Activated CD4-positive, alpha-beta memory T cell treated with anti-CD3 and anti-CD28 coated beads, Interleukin-2, amount 10 ng/mL, durations not matched to agents 7 days and 5 days (primary cell): ENCODE measurements at regions of chr1 and their contacts with region 1.

Region 1: GRCh38 chr1:167263819-167264464 is 43.3 kb downstream of the POU2F1 start:
- DNase-seq: no peak
- H3K4me3 Mint-ChIP-seq: no peak overlapping the region
- H3K27ac Mint-ChIP-seq: no peak overlapping the region
- H3K4me1 Mint-ChIP-seq: peaks cover 20% of the 10 kb centered on the region
- H3K27me3 Mint-ChIP-seq: no peaks in the 10 kb centered on the region

Region 2: DNA sequence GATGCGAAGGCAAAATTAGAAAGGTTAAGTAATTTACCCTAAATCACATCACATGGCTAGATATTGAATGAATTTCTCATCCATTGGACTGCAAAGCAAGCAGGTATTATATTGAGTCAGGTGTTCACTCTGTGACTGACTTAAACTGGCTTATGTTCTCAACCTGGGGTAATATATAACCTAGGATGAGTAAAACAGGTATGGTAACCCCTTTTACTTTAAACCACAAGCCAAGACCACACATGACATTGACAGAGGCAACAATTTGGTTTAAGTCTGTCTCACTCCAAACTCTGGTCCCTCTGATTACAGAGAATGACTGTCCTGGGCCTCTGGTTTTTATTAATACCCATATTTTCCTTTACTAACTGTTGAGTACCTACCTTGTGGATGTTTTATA is 241.6 kb before region 1 on chr1:
- CTCF ChIA-PET with region 1: no interaction called
- POLR2A ChIA-PET with region 1: no interaction called
- DNase-seq: no peak
- H3K4me3 Mint-ChIP-seq: no peak overlapping the region
- H3K27ac Mint-ChIP-seq: no peak overlapping the region
- H3K4me1 Mint-ChIP-seq: no peaks in the 10 kb centered on the region
- H3K27me3 Mint-ChIP-seq: peaks cover 32% of the 10 kb centered on the region

Region 3: GRCh38 chr1:167278497-167278896 is 14.6 kb after region 1 on chr1:
- CTCF ChIA-PET with region 1: interaction called, 12 read pairs
- POLR2A ChIA-PET with region 1: no interaction called
- DNase-seq: no peak
- H3K4me3 Mint-ChIP-seq: no peak overlapping the region
- H3K27ac Mint-ChIP-seq: no peak overlapping the region
- H3K4me1 Mint-ChIP-seq: peaks cover 16% of the 10 kb centered on the region
- H3K27me3 Mint-ChIP-seq: no peaks in the 10 kb centered on the region

Region 4: GRCh38 chr1:167312871-167313270 is 48.9 kb after region 1 on chr1:
- CTCF ChIA-PET with region 1: no interaction called
- POLR2A ChIA-PET with region 1: no interaction called
- DNase-seq: no peak
- H3K4me3 Mint-ChIP-seq: no peak overlapping the region
- H3K27ac Mint-ChIP-seq: no peak overlapping the region
- H3K4me1 Mint-ChIP-seq: peaks cover 15% of the 10 kb centered on the region
- H3K27me3 Mint-ChIP-seq: no peaks in the 10 kb centered on the region

Region 5: DNA sequence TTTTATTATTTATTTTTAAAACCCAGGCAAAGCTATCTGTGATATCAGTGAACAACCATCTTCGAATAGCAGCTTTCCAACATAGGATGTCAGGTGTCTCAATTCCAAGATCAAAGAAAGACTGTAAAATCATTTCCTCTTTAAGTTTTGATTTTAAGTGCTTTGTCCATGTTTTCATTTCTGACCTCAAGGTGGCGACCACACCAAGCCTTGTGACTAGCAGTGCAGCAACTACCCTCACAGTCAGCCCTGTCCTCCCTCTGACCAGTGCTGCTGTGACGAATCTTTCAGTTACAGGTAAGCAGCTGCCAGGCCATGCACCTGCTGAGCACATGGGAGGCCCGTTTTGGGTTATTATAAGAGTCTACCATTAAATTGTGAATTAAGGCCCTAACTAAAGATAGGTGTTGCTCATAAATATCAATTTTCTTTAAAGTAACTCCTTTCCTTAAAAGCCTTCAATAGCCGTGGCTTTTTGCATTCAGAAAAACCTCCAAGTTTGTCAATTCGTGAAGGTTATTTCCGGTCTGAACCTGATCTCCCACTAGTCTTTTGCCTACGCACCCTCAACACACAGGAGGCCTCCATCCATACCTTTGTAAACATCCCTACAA is 137.4 kb after region 1 on chr1:
- CTCF ChIA-PET with region 1: interaction called, 12 read pairs
- POLR2A ChIA-PET with region 1: no interaction called
- DNase-seq: peak; percentile 57
- H3K4me3 Mint-ChIP-seq: no peak overlapping the region
- H3K27ac Mint-ChIP-seq: no peak overlapping the region
- H3K4me1 Mint-ChIP-seq: no peaks in the 10 kb centered on the region
- H3K27me3 Mint-ChIP-seq: no peaks in the 10 kb centered on the region